SK-N-SH (cell line): ENCODE measurements at regions of chr3 and their contacts with region 1.

Region 1: DNA sequence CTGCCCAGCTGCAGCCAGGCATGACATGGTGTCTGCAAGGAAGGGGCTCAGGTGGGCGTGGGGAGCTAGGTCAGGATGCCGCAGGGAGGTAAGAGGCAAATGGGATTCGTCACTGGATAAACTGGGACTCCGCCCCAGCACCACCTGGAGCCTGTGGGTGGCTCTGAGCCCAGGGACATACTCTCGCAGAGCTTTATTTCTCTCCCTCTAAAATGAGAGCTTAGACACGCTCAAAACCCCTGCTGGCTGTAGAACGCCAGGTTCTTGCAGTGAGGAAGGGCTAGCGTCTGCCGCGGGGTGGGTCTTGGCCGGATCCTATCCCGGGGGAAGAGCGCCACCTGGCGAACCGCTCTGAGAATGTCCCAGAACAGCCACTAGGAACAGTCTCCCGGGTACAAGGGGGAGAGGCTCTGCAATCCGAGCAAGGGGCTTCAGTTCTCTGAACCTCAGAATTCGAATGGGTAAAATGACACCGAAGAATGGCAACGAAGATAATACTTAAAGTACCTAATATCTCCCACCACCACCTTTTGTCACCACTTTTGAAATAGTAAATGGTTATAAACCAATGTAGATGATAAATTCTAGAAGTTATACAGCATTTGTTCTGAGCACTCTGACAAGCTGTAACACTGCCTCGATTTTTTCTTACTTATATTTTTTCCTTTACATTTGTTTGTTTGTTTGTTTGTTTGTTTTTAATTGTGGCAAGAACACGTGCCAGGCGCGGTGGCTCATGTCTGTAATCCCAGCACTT is 53.2 kb upstream of the SRGAP3 start:
- DNase-seq: peak; percentile 88
- H3K4me3 ChIP-seq: peak overlapping the region; percentile 13 to 56; a peak in 2 of 4 replicates
- H3K27ac ChIP-seq: no peak overlapping the region
- H3K4me1 ChIP-seq: peaks cover 0 to 4% of the 10 kb centered on the region in 2 experiments; a peak in 1 of 4 replicates
- H3K27me3 ChIP-seq: no peaks in the 10 kb centered on the region
- CTCF ChIP-seq: peak; percentile 93
- EP300 ChIP-seq: no peak
- RAD21 ChIP-seq: peak; percentile 99

Region 2: DNA sequence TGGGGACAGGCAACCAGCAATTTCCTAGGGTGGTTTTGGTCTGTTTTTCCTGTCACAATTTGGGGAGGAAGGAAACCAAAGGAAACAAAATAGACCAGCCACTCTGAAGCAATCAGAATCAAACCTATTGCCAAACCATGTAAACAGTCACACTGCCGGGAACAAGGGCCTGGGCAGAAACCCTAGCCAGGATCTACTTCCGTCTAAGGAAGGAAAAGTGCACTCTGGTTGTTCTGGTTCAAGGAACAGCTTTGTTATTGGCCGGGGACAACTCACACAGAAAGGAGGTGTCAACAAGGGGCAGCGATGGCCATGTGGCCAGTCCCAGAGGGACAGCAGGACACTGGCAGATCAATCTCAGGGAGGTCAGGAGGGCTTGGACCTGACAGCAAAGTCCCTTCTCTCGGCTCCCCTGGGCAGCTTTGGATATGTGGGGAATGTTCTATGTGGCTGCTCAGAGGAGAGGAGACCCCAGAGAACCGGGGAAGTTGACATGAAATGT is 321.8 kb before region 1 on chr3:
- CTCF ChIA-PET with region 1: interaction called, 112 read pairs
- POLR2A ChIA-PET with region 1: no interaction called
- DNase-seq: no peak
- H3K4me3 ChIP-seq: no peak overlapping the region
- H3K27ac ChIP-seq: no peak overlapping the region
- H3K4me1 ChIP-seq: peaks cover 0 to 2% of the 10 kb centered on the region in 2 experiments; a peak in 1 of 4 replicates
- H3K27me3 ChIP-seq: no peaks in the 10 kb centered on the region
- CTCF ChIP-seq: no peak
- EP300 ChIP-seq: no peak
- RAD21 ChIP-seq: no peak

Region 3: GRCh38 chr3:9028134-9028533 is 274.5 kb before region 1 on chr3:
- CTCF ChIA-PET with region 1: interaction called, 11 read pairs
- POLR2A ChIA-PET with region 1: no interaction called
- DNase-seq: peak; percentile 72
- H3K4me3 ChIP-seq: no peak overlapping the region
- H3K27ac ChIP-seq: peak overlapping the region in 1 of 2 experiments; percentile 71; a peak in 2 of 4 replicates
- H3K4me1 ChIP-seq: peaks cover 0 to 23% of the 10 kb centered on the region in 2 experiments; a peak in 1 of 4 replicates
- H3K27me3 ChIP-seq: no peaks in the 10 kb centered on the region
- CTCF ChIP-seq: no peak
- EP300 ChIP-seq: peak in 1 of 2 experiments; percentile 67; a peak in 2 of 4 replicates
- RAD21 ChIP-seq: no peak

Region 4: DNA sequence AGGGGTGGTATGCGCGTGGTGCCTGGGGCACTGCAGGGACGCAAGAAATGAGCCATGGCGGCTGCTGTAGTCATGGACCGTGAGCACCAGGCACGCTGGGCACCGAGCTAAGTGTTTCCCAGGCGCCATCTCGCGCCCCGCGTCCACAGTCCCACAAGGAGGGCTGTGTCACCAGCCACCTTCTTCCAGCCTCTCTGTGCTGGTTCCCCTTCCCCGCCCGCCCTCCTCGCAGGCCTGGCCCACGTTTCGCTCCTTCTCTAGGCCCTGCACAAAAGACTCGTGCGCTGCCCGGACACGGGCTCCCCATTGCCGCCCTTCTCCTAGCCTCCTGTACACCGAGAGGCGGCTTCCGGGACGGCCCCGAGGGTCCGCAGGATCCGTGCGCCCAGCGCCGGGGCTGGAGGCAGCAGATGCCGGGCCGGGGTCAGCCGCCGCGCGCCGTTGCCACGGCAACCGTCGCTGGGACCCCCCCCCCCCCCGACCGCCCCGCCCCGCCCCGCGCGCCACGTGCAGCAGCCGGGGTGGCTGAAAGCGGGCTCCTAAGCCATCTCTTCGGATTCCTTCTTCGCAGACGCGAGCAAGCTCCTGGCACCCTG is 166.6 kb before region 1 on chr3:
- CTCF ChIA-PET with region 1: interaction called, 12 read pairs
- POLR2A ChIA-PET with region 1: no interaction called
- DNase-seq: peak; percentile 83
- H3K4me3 ChIP-seq: no peak overlapping the region
- H3K27ac ChIP-seq: no peak overlapping the region
- H3K4me1 ChIP-seq: peaks cover 0 to 17% of the 10 kb centered on the region in 2 experiments; a peak in 2 of 4 replicates
- H3K27me3 ChIP-seq: no peaks in the 10 kb centered on the region
- CTCF ChIP-seq: no peak
- EP300 ChIP-seq: no peak
- RAD21 ChIP-seq: no peak

Region 5: GRCh38 chr3:9249273-9250192 is 53.1 kb before region 1 on chr3 and contains the start of gene SRGAP3:
- CTCF ChIA-PET with region 1: interaction called, 37 read pairs
- POLR2A ChIA-PET with region 1: no interaction called
- DNase-seq: peak; percentile 89
- H3K4me3 ChIP-seq: peak within 1 kb of the TSS; percentile 69 to 74
- H3K27ac ChIP-seq: peak within 1 kb of the TSS in 1 of 2 experiments; percentile 78; a peak in 2 of 4 replicates
- H3K4me1 ChIP-seq: peaks cover 0 to 34% of the 10 kb centered on the region in 2 experiments; a peak in 2 of 4 replicates
- H3K27me3 ChIP-seq: peaks cover 2% of the 10 kb centered on the region; the same call in 1 of the 2 replicates
- CTCF ChIP-seq: peak; percentile 39; the same call in 1 of the 2 replicates
- EP300 ChIP-seq: no peak
- RAD21 ChIP-seq: peak; percentile 53
- polyA plus RNA-seq, gene SRGAP3: 2.8 and 3.0 TPM in 2 replicates

Region 6: GRCh38 chr3:9314796-9315195 is 12.2 kb after region 1 on chr3:
- CTCF ChIA-PET with region 1: interaction called, 29 read pairs
- POLR2A ChIA-PET with region 1: no interaction called
- DNase-seq: peak; percentile 58
- H3K4me3 ChIP-seq: no peak overlapping the region
- H3K27ac ChIP-seq: peak overlapping the region in 1 of 2 experiments; percentile 1; a peak in 1 of 4 replicates
- H3K4me1 ChIP-seq: peaks cover 0 to 10% of the 10 kb centered on the region in 2 experiments; a peak in 1 of 4 replicates
- H3K27me3 ChIP-seq: no peaks in the 10 kb centered on the region
- CTCF ChIP-seq: no peak
- EP300 ChIP-seq: peak in 1 of 2 experiments; percentile 52; a peak in 2 of 4 replicates
- RAD21 ChIP-seq: no peak

Region 7: GRCh38 chr3:9553948-9554513 is 251.4 kb after region 1 on chr3:
- CTCF ChIA-PET with region 1: no interaction called
- POLR2A ChIA-PET with region 1: no interaction called
- DNase-seq: no peak
- H3K4me3 ChIP-seq: peak overlapping the region in 1 of 2 experiments; percentile 51; a peak in 3 of 4 replicates
- H3K27ac ChIP-seq: no peak overlapping the region
- H3K4me1 ChIP-seq: peaks cover 0 to 12% of the 10 kb centered on the region in 2 experiments; a peak in 2 of 4 replicates
- H3K27me3 ChIP-seq: no peaks in the 10 kb centered on the region
- CTCF ChIP-seq: no peak
- EP300 ChIP-seq: no peak
- RAD21 ChIP-seq: no peak